Stomach (tissue), 19 donors: ENCODE measurements at regions of chr4 and their contacts with region 1.

Region 1: GRCh38 chr4:10577018-10577417 is 107.5 kb downstream of the CLNK start:
- DNase-seq: peak in 1 of 2 donors; percentile 16
- H3K4me3 ChIP-seq: no peak overlapping the region
- H3K27ac ChIP-seq: no peak overlapping the region
- H3K4me1 ChIP-seq: no peaks in the 10 kb centered on the region
- H3K27me3 ChIP-seq: no peaks in the 10 kb centered on the region
- CTCF ChIP-seq: no peak
- EP300 ChIP-seq: no peak
- POLR2A ChIP-seq: no peak

Region 2: DNA sequence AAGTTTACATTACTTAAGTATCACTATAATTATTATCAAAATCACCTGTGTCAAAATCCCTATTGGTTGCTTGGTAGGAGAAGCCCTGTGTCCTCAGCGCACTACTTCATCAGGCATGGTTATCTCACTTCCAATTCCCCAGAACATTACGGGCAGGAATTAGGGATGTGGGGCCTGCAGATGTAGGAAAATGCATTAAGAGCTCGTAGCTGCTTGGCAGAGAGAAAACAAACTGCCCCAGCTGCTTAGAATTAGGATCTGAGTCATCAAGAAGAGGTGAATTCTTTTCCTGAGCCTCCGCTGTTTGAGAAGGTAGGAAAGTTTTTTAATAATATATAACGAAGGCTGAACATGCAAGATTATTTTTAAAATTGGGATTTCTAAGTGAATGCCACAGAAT is 138.7 kb after region 1 on chr4:
- intact Hi-C with region 1: loop called (anchors 10 kb)
- DNase-seq: peak in 1 of 2 donors; percentile 32
- H3K4me3 ChIP-seq: no peak overlapping the region
- H3K27ac ChIP-seq: no peak overlapping the region
- H3K4me1 ChIP-seq: no peaks in the 10 kb centered on the region
- H3K27me3 ChIP-seq: no peaks in the 10 kb centered on the region
- CTCF ChIP-seq: no peak
- EP300 ChIP-seq: no peak
- POLR2A ChIP-seq: no peak

Region 3: GRCh38 chr4:10747186-10747585 is 170.2 kb after region 1 on chr4:
- intact Hi-C with region 1: no loop called
- DNase-seq: no peak
- H3K4me3 ChIP-seq: no peak overlapping the region
- H3K27ac ChIP-seq: no peak overlapping the region
- H3K4me1 ChIP-seq: no peaks in the 10 kb centered on the region
- H3K27me3 ChIP-seq: no peaks in the 10 kb centered on the region
- CTCF ChIP-seq: no peak
- EP300 ChIP-seq: no peak
- POLR2A ChIP-seq: no peak

Region 4: GRCh38 chr4:10872833-10873517 is 296.0 kb after region 1 on chr4:
- intact Hi-C with region 1: no loop called
- DNase-seq: no peak
- H3K4me3 ChIP-seq: no peak overlapping the region
- H3K27ac ChIP-seq: no peak overlapping the region
- H3K4me1 ChIP-seq: no peaks in the 10 kb centered on the region
- H3K27me3 ChIP-seq: no peaks in the 10 kb centered on the region
- CTCF ChIP-seq: no peak
- EP300 ChIP-seq: no peak
- POLR2A ChIP-seq: no peak